ENCODE measurements at regions of chr4 and their contacts with region 1.

Region 1: DNA sequence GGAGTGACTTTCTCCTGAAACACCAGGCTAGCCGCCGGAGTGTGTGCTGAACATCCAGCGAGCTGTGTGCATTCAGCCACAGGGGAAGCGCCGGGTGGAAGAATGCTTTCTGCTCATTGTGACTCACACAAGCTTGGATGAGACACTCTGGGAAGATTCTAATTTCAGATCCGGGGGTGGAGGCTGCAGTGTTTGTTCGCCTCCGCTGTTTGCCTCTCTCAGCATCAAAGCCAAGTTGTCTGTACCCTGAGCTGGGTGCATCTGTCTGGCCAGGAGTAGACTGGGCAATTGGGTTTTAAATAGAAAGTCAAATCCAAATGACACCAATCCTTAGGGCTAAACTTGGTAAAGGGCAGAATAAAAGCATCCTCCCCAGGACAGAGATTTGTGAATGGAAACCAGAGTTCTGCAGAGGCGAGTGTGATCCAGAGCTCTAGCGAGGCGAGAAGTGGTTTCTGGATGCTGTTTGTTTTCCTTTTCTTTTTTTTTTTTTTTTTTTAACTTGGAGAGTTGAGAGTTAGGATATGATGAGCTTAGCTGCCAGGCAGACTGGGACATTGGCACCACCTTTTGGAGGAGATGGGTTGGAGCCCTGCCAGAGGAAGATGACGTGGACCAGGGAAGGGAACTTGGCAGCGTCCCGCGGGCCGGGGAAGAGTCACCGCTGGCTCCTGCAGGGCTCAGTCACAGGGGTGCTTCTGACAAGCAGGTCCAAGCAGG is 196.0 kb upstream of the PSAPL1 start:
- DNase-seq: peak; percentile 53
- ATAC-seq: peak; percentile 66
- H3K4me3 ChIP-seq: no peak overlapping the region
- H3K27ac ChIP-seq: no peak overlapping the region
- H3K4me1 ChIP-seq: no peaks in the 10 kb centered on the region
- H3K27me3 ChIP-seq: no peaks in the 10 kb centered on the region
- CTCF ChIP-seq: no peak

Region 2: GRCh38 chr4:7557447-7557846 is 73.3 kb before region 1 on chr4:
- CTCF ChIA-PET with region 1: no interaction called
- POLR2A ChIA-PET with region 1: interaction called, 16 read pairs
- in situ Hi-C with region 1: no loop called
- intact Hi-C with region 1: no loop called
- DNase-seq: peak; percentile 2
- ATAC-seq: peak; percentile 86
- H3K4me3 ChIP-seq: no peak overlapping the region
- H3K27ac ChIP-seq: no peak overlapping the region
- H3K4me1 ChIP-seq: peaks cover 4% of the 10 kb centered on the region; the same call in 1 of the 2 replicates
- H3K27me3 ChIP-seq: no peaks in the 10 kb centered on the region
- CTCF ChIP-seq: no peak

Region 3: GRCh38 chr4:7646384-7647061 is 15.8 kb after region 1 on chr4:
- CTCF ChIA-PET with region 1: no interaction called
- POLR2A ChIA-PET with region 1: interaction called, 13 read pairs
- in situ Hi-C with region 1: no loop called
- intact Hi-C with region 1: no loop called
- DNase-seq: no peak
- ATAC-seq: no peak
- H3K4me3 ChIP-seq: no peak overlapping the region
- H3K27ac ChIP-seq: no peak overlapping the region
- H3K4me1 ChIP-seq: no peaks in the 10 kb centered on the region
- H3K27me3 ChIP-seq: no peaks in the 10 kb centered on the region
- CTCF ChIP-seq: no peak

Measured in Panc1 (cell line).